Natural killer cell (primary cell): ENCODE measurements at regions of chrX and their contacts with region 1.

Region 1: GRCh38 chrX:12946838-12947544 is 27.9 kb upstream of the TMSB4X start:
- DNase-seq: peak; percentile 60 to 88
- ATAC-seq: peak; percentile 54 to 72 (median 62)
- H3K4me3 ChIP-seq: no peak overlapping the region
- H3K4me3 Mint-ChIP-seq: peak overlapping the region; percentile 55
- H3K27ac ChIP-seq: peak overlapping the region; percentile 93
- H3K27ac Mint-ChIP-seq: peak overlapping the region; percentile 95 to 97
- H3K4me1 ChIP-seq: peaks cover 53% of the 10 kb centered on the region
- H3K4me1 Mint-ChIP-seq: peaks cover 32 to 52% of the 10 kb centered on the region in 2 donors
- H3K27me3 ChIP-seq: no peaks in the 10 kb centered on the region
- H3K27me3 Mint-ChIP-seq: peaks cover 0 to 3% of the 10 kb centered on the region in 2 donors
- CTCF ChIP-seq: peak; percentile 91

Region 2: GRCh38 chrX:12984629-12985319 is 37.8 kb after region 1 on chrX:
- intact Hi-C with region 1: loop called (anchors 5 kb)
- DNase-seq: peak; percentile 26 to 75
- ATAC-seq: peak; percentile 77 to 83 (median 82)
- H3K4me3 ChIP-seq: no peak overlapping the region
- H3K4me3 Mint-ChIP-seq: peak overlapping the region; percentile 74
- H3K27ac ChIP-seq: peak overlapping the region; percentile 69
- H3K27ac Mint-ChIP-seq: peak overlapping the region; percentile 75 to 83
- H3K4me1 ChIP-seq: peaks cover 49% of the 10 kb centered on the region
- H3K4me1 Mint-ChIP-seq: peaks cover 51 to 58% of the 10 kb centered on the region in 2 donors
- H3K27me3 ChIP-seq: no peaks in the 10 kb centered on the region
- H3K27me3 Mint-ChIP-seq: peaks cover 0 to 9% of the 10 kb centered on the region in 2 donors
- CTCF ChIP-seq: no peak

Region 3: DNA sequence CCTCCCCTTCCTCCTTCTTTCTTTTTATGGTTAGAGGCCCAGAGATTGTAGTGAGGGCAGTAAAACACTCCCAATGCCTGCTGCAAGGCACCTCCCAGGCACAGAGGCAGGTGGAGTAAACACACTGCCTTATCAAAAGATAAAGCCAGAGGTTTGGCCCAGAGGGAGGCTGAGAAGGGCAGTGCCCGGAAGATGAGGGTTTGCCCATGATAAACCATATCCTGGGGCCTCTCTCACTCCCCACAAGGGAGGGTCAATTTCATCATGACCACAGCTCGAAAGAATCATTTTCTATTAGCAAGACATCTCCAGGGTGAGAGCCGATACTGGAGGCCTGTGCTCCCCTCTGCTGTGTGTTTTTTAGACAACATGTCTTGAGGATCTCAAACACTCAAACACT is 195.9 kb after region 1 on chrX:
- intact Hi-C with region 1: loop called (anchors 1 kb)
- DNase-seq: no peak
- ATAC-seq: peak; percentile 70 to 83 (median 71)
- H3K4me3 ChIP-seq: no peak overlapping the region
- H3K4me3 Mint-ChIP-seq: peak overlapping the region; percentile 56
- H3K27ac ChIP-seq: peak overlapping the region; percentile 66
- H3K27ac Mint-ChIP-seq: peak overlapping the region; percentile 82 to 85
- H3K4me1 ChIP-seq: peaks cover 9% of the 10 kb centered on the region
- H3K4me1 Mint-ChIP-seq: peaks cover 14 to 16% of the 10 kb centered on the region in 2 donors
- H3K27me3 ChIP-seq: no peaks in the 10 kb centered on the region
- H3K27me3 Mint-ChIP-seq: peaks cover 0 to 9% of the 10 kb centered on the region in 2 donors
- CTCF ChIP-seq: no peak

Region 4: DNA sequence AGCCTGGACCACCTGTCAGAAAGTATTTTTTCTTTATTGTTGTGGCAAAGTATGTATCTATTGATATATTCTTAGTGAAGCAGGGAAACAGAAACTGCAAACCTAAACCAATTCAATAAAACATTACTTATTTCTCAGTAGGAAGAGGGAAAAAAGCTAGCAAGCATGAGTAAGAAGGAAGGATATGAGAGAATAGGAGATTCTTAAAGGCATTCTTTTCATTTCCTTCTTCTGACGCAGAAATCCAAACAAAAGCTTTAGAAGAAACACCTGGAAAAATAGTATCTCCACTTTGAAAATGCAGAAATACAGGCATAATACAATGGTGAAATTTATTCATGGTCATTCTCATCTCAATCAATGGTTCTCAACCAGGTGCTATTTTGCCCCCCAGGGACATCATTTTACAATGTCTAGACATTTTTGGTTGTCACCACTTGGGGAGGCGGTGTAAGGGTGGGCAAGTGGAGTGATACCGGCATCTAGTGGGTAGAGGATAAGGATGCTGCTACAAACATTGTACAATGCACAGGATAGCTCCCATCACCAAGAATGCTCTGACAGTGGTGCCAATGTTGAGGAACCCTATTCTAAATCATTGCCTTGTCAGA is 394.6 kb after region 1 on chrX:
- intact Hi-C with region 1: no loop called
- DNase-seq: peak in 1 of 2 donors; percentile 6
- ATAC-seq: no peak
- H3K4me3 ChIP-seq: no peak overlapping the region
- H3K4me3 Mint-ChIP-seq: no peak overlapping the region
- H3K27ac ChIP-seq: no peak overlapping the region
- H3K27ac Mint-ChIP-seq: no peak overlapping the region
- H3K4me1 ChIP-seq: no peaks in the 10 kb centered on the region
- H3K4me1 Mint-ChIP-seq: no peaks in the 10 kb centered on the region
- H3K27me3 ChIP-seq: no peaks in the 10 kb centered on the region
- H3K27me3 Mint-ChIP-seq: peaks cover 0 to 2% of the 10 kb centered on the region in 2 donors
- CTCF ChIP-seq: no peak

Region 5: DNA sequence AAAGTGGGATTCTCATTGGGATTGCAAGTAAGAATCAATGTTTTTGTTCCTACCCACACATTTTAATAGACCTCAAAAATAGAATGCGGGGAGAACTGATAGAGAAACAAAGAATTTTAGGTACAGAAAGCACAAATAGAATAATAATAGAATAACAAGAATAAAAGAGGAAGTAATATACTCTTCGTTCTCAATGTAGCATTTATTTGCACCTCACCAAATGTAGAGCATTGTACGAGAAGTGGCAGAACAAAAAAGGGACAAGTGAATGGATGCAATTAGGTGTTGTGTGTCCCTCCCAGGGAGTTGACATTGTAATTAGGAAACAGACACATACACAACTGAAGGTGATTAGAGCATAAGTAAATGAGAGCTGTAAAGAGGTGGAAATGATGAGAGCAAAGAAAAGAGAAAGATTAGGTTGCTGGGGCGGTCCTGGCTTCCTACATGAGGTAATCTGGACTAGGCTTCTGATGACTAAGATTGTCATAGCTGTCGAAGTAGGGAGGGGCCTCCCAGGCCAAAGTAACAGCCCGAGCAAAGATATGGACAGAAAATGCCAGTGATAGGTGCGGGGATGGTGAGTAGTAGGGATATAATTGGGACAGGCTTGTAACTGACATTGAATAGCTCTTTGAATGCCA is 752.3 kb after region 1 on chrX:
- intact Hi-C with region 1: loop called (anchors 10 kb)
- DNase-seq: peak in 1 of 2 donors; percentile 18
- ATAC-seq: peak; percentile 59 to 75 (median 71)
- H3K4me3 ChIP-seq: no peak overlapping the region
- H3K4me3 Mint-ChIP-seq: peak overlapping the region; percentile 6
- H3K27ac ChIP-seq: peak overlapping the region; percentile 67
- H3K27ac Mint-ChIP-seq: peak overlapping the region; percentile 71 to 88
- H3K4me1 ChIP-seq: peaks cover 57% of the 10 kb centered on the region
- H3K4me1 Mint-ChIP-seq: peaks cover 71 to 73% of the 10 kb centered on the region in 2 donors
- H3K27me3 ChIP-seq: no peaks in the 10 kb centered on the region
- H3K27me3 Mint-ChIP-seq: no peaks in the 10 kb centered on the region
- CTCF ChIP-seq: no peak